PC-3 (cell line): ENCODE measurements at regions of chr7 and their contacts with region 1.

Region 1: GRCh38 chr7:94580596-94580995 is 71.0 kb downstream of the CASD1 start:
- DNase-seq: peak; percentile 91
- ATAC-seq: peak; percentile 87
- H3K4me3 ChIP-seq: no peak overlapping the region
- H3K27ac ChIP-seq: peak overlapping the region; percentile 52
- H3K4me1 ChIP-seq: peaks cover 54% of the 10 kb centered on the region
- H3K27me3 ChIP-seq: no peaks in the 10 kb centered on the region
- CTCF ChIP-seq: no peak

Region 2: GRCh38 chr7:94509879-94510581 is 70.6 kb before region 1 on chr7:
- CTCF ChIA-PET with region 1: no interaction called
- POLR2A ChIA-PET with region 1: no interaction called
- intact Hi-C with region 1: loop called (anchors 2 kb)
- DNase-seq: peak; percentile 54
- ATAC-seq: peak; percentile 72
- H3K4me3 ChIP-seq: peak overlapping the region; percentile 88
- H3K27ac ChIP-seq: peak overlapping the region; percentile 80
- H3K4me1 ChIP-seq: peaks cover 32% of the 10 kb centered on the region
- H3K27me3 ChIP-seq: no peaks in the 10 kb centered on the region
- CTCF ChIP-seq: no peak

Region 3: GRCh38 chr7:94620703-94621118 is 40.1 kb after region 1 on chr7:
- CTCF ChIA-PET with region 1: no interaction called
- POLR2A ChIA-PET with region 1: interaction called, 3 read pairs
- intact Hi-C with region 1: loop called (anchors 5 kb)
- DNase-seq: peak; percentile 94
- ATAC-seq: peak; percentile 98
- H3K4me3 ChIP-seq: no peak overlapping the region
- H3K27ac ChIP-seq: peak overlapping the region; percentile 80
- H3K4me1 ChIP-seq: peaks cover 21% of the 10 kb centered on the region
- H3K27me3 ChIP-seq: no peaks in the 10 kb centered on the region
- CTCF ChIP-seq: no peak

Region 4: GRCh38 chr7:94632338-94633013 is 51.9 kb after region 1 on chr7:
- CTCF ChIA-PET with region 1: no interaction called
- POLR2A ChIA-PET with region 1: no interaction called
- intact Hi-C with region 1: loop called (anchors 1 kb)
- DNase-seq: peak; percentile 86
- ATAC-seq: peak; percentile 98
- H3K4me3 ChIP-seq: peak overlapping the region; percentile 41; the same call in 1 of the 2 replicates
- H3K27ac ChIP-seq: peak overlapping the region; percentile 62
- H3K4me1 ChIP-seq: peaks cover 20% of the 10 kb centered on the region
- H3K27me3 ChIP-seq: no peaks in the 10 kb centered on the region
- CTCF ChIP-seq: no peak